GM13976 (cell line): ENCODE measurements at regions of chr5 and their contacts with region 1.

Region 1: GRCh38 chr5:80296121-80296520 is 23.7 kb upstream of the SPZ1 start:
- DNase-seq: no peak
- CTCF ChIP-seq: no peak

Region 2: GRCh38 chr5:80093796-80094195 is 202.3 kb before region 1 on chr5:
- in situ Hi-C with region 1: loop called (anchors 10 kb)
- DNase-seq: no peak
- CTCF ChIP-seq: no peak